ENCODE measurements at regions of chr17 and their contacts with region 1.

Region 1: DNA sequence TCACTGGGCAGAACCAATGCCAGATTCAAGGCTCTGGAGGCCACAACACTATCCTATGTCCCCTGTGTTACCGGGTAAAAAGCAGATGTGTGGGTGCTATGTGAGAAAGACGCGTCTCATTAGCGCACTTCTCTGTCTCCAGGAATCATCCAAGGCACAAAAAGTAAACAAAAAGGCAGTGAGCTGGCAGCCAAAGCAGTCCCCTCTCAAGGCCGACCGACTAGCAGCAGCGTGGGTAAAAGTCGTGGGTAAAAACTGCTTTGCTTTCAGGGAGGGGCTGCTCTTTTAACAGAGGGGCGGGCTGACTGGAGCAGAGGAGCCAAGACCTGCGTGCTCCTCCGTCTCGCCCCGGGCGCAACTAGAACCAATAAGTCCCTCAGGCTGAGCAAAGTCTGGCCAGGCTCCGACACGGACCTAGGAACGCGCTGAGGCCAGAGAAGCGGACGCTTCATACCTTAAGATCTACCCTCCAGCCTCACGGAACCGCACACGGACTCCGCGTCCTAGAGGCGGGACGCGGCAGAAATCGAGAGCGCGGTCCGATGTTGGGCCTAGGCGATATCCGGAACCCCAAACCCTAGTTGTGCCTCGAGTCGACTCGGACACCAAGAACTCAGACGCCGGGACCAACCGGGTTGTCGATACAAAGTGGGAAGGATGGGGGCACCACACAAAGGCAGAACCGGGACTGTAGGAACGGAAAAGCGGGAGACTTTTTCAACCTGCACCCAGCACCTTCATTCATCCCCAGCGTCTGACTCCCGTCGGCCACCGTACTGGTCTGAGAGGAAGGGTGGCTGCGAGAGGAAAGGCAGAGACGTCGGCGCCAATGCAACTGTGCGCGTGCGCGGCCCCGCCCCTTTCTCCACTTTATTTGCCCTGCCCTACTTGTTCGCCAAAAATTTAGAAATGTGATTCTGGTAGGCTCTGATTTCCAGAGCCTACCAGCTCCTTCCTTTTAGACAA is at the start of gene INTS2:
- DNase-seq: peak; percentile 92 to 98 (median 96)
- ATAC-seq: peak; percentile 96 to 99 (median 99)
- H3K4me3 ChIP-seq: peak within 1 kb of the TSS; percentile 47 to 79 (median 68)
- H3K27ac ChIP-seq: peak within 1 kb of the TSS; percentile 55 to 80 (median 66)
- H3K4me1 ChIP-seq: peaks cover 0 to 7% (median 4%) of the 10 kb centered on the region in 3 donors
- H3K27me3 ChIP-seq: no peaks in the 10 kb centered on the region
- CTCF ChIP-seq: no peak
- total RNA-seq, gene INTS2: 1.5 to 5.2 (median 2.8) TPM

Region 2: DNA sequence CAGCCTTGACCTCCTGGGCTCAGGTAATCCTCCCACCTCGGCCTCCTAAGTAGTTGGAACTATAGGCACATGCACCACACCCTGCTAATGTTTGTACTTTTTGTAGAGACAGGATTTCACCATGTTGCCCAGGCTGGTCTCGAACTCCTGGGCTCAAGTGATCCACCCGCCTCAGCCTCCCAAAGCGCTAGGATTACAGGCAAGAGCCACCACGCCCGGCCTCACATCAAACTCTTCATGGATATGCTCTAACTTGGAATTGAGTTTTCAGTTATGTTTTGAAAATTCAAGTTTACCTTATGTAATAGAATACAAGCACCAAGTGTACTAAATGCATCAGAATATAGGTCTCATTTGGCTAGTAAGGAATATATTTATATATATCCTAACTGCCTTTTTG is 183.7 kb before region 1 on chr17:
- intact Hi-C with region 1: no loop called
- DNase-seq: no peak
- ATAC-seq: no peak
- H3K4me3 ChIP-seq: no peak overlapping the region
- H3K27ac ChIP-seq: no peak overlapping the region
- H3K4me1 ChIP-seq: no peaks in the 10 kb centered on the region
- H3K27me3 ChIP-seq: no peaks in the 10 kb centered on the region
- CTCF ChIP-seq: no peak

Region 3: GRCh38 chr17:61816538-61816937 is 110.9 kb before region 1 on chr17:
- intact Hi-C with region 1: no loop called
- DNase-seq: no peak
- ATAC-seq: no peak
- H3K4me3 ChIP-seq: no peak overlapping the region
- H3K27ac ChIP-seq: no peak overlapping the region
- H3K4me1 ChIP-seq: no peaks in the 10 kb centered on the region
- H3K27me3 ChIP-seq: no peaks in the 10 kb centered on the region
- CTCF ChIP-seq: no peak

Region 4: DNA sequence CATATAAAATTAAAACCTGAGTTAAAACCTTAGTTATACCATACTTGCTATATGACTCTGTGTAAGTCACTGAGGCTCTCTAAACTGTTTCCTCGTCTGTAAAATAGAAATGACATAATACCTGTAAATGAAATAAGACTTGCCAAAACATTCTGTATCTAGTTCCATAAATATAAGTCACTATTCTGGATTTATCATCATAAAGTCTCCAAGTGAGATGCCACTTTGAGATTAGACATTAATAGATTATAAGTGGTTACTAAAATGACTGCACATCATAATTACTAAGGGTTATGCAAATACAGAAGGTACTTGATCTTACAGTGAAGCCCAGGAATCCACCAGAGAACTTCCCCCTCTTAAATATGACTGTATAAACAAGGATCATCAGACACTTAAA is 52.2 kb before region 1 on chr17:
- intact Hi-C with region 1: loop called in 1 of 3 experiments (anchors 10 kb)
- DNase-seq: no peak
- ATAC-seq: no peak
- H3K4me3 ChIP-seq: no peak overlapping the region
- H3K27ac ChIP-seq: no peak overlapping the region
- H3K4me1 ChIP-seq: no peaks in the 10 kb centered on the region
- H3K27me3 ChIP-seq: no peaks in the 10 kb centered on the region
- CTCF ChIP-seq: no peak

Region 5: DNA sequence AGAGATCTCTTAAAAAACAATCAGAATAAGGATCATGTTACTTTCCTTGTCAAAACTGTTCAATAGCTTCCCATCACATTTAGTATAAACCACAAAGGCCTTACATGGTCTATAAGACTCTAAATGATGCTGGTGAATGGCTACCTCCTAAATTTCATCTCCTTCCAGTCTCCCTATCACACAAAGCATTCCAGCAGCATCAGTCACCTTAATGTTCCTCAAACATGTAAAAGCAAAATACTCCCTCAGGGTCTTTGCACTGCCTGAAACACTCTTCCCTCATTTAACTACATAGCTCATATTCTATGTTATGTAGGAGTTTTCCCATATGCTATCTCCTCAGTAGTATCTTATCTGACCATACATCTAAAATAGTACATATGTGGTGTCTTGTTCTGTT is 53.8 kb after region 1 on chr17:
- intact Hi-C with region 1: loop called in 1 of 3 experiments (anchors 10 kb)
- DNase-seq: no peak
- ATAC-seq: no peak
- H3K4me3 ChIP-seq: no peak overlapping the region
- H3K27ac ChIP-seq: no peak overlapping the region
- H3K4me1 ChIP-seq: no peaks in the 10 kb centered on the region
- H3K27me3 ChIP-seq: no peaks in the 10 kb centered on the region
- CTCF ChIP-seq: no peak

Measured in pancreas (tissue), 10 donors.